ENCODE measurements at regions of chr11 and their contacts with region 1.

Region 1: DNA sequence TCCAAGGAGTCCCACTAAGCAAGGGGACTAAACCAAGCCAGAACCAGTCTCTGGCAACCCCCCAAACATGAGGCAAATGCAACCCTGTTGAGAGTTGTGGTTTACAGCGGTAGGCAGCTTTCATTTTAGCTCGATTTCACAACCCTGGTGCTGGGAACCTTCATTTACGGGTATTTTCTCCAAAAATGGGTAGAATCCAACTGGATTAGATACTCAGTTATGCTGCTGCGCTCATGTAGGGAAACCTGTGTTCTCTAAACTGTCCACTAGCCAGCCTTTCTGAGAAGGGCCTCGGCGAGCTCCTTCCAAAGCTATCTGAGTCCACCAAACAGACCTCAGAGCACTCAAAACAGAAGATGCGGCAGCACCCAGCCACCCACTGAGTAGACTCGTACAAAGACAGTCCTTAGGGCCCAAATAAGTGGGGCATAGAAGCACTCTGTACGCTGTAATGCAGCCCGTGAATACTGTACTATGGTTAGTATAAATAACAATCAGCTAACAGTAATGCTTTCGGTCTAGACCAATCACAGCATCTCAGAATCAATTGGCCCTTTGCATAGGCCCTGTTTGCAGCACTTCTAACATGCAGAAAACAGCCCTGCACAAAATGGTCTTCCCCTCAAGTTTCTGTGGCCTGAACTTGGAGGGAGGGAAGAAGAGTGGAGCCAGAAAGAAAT is 104.7 kb downstream of the ETS1 start:
- DNase-seq: peak; percentile 79
- ATAC-seq: peak; percentile 66
- H3K4me3 Mint-ChIP-seq: peak overlapping the region; percentile 66
- H3K27ac Mint-ChIP-seq: peak overlapping the region; percentile 94
- H3K4me1 Mint-ChIP-seq: peaks cover 90% of the 10 kb centered on the region
- H3K27me3 Mint-ChIP-seq: no peaks in the 10 kb centered on the region
- CTCF ChIP-seq: no peak

Region 2: DNA sequence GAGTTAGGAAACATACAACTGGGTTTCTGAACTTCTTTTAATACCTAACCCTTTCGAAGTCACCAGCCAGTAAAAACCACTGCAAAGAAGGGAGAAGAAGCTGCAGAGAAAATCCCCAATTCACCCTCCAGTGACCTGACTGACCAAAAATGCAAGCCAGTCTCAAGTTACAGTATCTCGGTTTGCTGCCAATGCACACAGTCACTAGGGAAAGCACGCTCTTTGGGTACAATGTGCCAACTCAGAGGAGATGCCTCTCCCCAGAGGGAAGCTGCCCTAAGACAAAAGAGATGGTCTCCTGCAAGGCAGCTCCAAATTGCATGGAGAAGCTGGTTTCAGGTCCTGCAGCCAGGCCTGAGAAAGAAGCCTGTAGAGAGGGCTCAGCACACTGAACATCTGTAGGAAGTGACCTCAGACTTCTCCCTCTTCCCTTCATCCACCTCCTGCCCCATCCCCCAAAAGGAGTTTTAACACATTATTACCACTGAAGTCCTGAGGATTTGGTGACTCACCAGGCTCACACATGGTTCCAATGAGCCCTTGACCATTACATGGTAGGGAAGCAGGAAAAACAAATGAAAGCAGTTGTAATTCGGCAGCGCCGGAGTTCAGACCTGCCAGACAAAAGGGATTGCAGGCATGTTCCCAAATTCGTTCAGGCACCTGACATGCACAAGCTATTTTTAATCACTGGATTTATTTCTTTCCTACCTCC is 14.6 kb after region 1 on chr11:
- CTCF ChIA-PET with region 1: interaction called, 20 read pairs
- POLR2A ChIA-PET with region 1: interaction called, 1,082 read pairs
- intact Hi-C with region 1: no loop called
- DNase-seq: peak; percentile 49
- ATAC-seq: no peak
- H3K4me3 Mint-ChIP-seq: peak overlapping the region; percentile 88
- H3K27ac Mint-ChIP-seq: peak overlapping the region; percentile 98
- H3K4me1 Mint-ChIP-seq: peaks cover 94% of the 10 kb centered on the region
- H3K27me3 Mint-ChIP-seq: no peaks in the 10 kb centered on the region
- CTCF ChIP-seq: no peak